Body of pancreas (tissue), 4 donors: ENCODE measurements at regions of chr20 and their contacts with region 1.

Region 1: GRCh38 chr20:45890985-45891983 is at the starts of genes CTSA and NEURL2:
- DNase-seq: peak; percentile 91 to 97 (median 94)
- ATAC-seq: peak; percentile 86
- H3K4me3 ChIP-seq: peak within 1 kb of the TSS; percentile 86 to 90
- H3K27ac ChIP-seq: peak within 1 kb of the TSS; percentile 65 to 80 (median 75)
- H3K4me1 ChIP-seq: peaks cover 33% of the 10 kb centered on the region
- H3K27me3 ChIP-seq: no peaks in the 10 kb centered on the region
- CTCF ChIP-seq: no peak
- POLR2A ChIP-seq: peak; percentile 27 to 72 (median 67)
- total RNA-seq, gene CTSA: 41.0 to 43.8 TPM
- total RNA-seq, gene NEURL2: 3.3 to 5.2 TPM

Region 2: GRCh38 chr20:45969347-45970242 is 78.3 kb after region 1 on chr20:
- intact Hi-C with region 1: loop called (anchors 10 kb)
- DNase-seq: peak; percentile 24 to 46 (median 39)
- ATAC-seq: no peak
- H3K4me3 ChIP-seq: no peak overlapping the region
- H3K27ac ChIP-seq: peak overlapping the region in 3 of 4 donors; percentile 2 to 97 (median 10)
- H3K4me1 ChIP-seq: peaks cover 26% of the 10 kb centered on the region
- H3K27me3 ChIP-seq: no peaks in the 10 kb centered on the region
- CTCF ChIP-seq: peak in 6 of 7 experiments; percentile 38 to 51 (median 47)
- POLR2A ChIP-seq: no peak